ENCODE measurements at regions of chrX and their contacts with region 1.

Region 1: GRCh38 chrX:70030301-70030767 is 19.4 kb downstream of the AWAT2 start:
- DNase-seq: peak; percentile 50
- ATAC-seq: peak; percentile 78
- H3K4me3 Mint-ChIP-seq: no peak overlapping the region
- H3K27ac Mint-ChIP-seq: no peak overlapping the region
- H3K4me1 Mint-ChIP-seq: peaks cover 8% of the 10 kb centered on the region
- H3K27me3 Mint-ChIP-seq: no peaks in the 10 kb centered on the region

Region 2: DNA sequence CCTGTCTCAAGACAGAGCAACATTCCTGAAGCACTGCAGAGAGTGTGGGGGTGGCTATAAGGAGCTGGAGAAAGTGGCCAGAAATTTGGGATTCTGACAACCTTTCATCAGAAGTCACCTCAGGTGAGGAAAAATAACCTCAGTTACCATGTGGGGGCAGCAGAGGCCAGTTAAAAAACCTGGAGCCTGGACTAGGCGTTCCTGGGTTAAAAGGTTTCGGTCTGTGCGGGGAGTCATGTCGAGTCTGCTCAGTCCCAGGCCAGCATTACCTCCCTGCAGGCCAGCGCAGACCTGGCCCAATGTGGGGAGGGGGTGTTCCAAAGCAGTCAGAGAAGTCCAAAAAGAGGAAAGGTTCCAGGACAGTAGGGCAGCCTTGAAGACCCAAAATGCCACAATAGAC is 537.1 kb before region 1 on chrX:
- CTCF ChIA-PET with region 1: no interaction called
- POLR2A ChIA-PET with region 1: no interaction called
- intact Hi-C with region 1: loop called in 1 of 2 experiments (anchors 1 kb)
- DNase-seq: peak; percentile 48
- ATAC-seq: peak; percentile 42
- H3K4me3 Mint-ChIP-seq: no peak overlapping the region
- H3K27ac Mint-ChIP-seq: no peak overlapping the region
- H3K4me1 Mint-ChIP-seq: no peaks in the 10 kb centered on the region
- H3K27me3 Mint-ChIP-seq: peaks cover 11% of the 10 kb centered on the region

Region 3: DNA sequence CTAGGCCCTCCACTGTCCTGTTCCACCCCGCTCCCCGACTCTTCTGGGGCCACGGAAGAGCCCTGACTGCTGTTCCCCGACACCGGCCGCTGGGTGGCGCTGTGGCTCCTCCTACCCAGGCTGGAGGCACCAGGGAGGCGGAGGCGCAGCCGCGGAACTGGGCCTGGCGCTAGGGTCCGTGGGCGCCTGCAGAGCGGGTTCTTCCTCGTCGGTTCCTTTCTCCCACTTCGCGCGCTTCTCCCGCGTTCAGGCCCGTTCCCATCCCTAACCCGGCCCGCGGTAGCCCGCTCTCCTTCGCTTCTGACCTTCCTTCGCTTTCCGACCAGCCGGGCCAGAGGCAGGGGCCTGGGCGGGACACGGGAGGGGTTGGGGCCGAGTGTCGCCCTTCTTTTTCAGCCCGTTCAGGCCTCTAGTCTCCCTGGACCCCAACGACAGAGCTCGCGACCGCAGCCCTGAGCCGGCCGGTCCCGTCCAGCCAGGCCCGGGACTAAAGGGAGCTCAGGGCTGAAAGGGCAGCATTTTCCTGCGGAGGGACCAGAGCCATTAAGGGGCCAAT is 491.9 kb before region 1 on chrX:
- CTCF ChIA-PET with region 1: interaction called, 12 read pairs
- POLR2A ChIA-PET with region 1: no interaction called
- intact Hi-C with region 1: loop called (anchors 1 kb)
- DNase-seq: peak; percentile 83
- ATAC-seq: peak; percentile 96
- H3K4me3 Mint-ChIP-seq: no peak overlapping the region
- H3K27ac Mint-ChIP-seq: no peak overlapping the region
- H3K4me1 Mint-ChIP-seq: peaks cover 8% of the 10 kb centered on the region
- H3K27me3 Mint-ChIP-seq: peaks cover 9% of the 10 kb centered on the region

Region 4: DNA sequence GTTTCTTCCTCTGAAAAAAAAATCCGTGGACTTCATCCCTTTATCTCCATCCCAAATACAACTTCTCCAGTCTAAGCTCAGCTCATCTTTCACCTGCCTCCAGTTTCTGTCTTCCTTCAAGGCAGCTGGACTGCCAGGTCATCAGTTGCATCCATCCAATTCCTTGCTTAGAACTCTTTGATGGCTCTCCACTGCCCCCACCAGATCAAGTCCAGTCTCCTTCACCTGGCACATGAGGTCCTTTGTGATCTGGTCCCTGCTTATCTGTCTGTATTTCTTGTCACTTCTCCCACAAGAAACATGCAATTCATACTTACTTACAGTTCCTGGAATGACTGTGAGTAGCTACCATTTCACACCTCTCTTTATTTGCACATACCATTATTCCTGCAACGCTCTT is 65.7 kb after region 1 on chrX:
- CTCF ChIA-PET with region 1: interaction called, 13 read pairs
- POLR2A ChIA-PET with region 1: no interaction called
- intact Hi-C with region 1: loop called (anchors 5 kb)
- DNase-seq: no peak
- ATAC-seq: no peak
- H3K4me3 Mint-ChIP-seq: no peak overlapping the region
- H3K27ac Mint-ChIP-seq: no peak overlapping the region
- H3K4me1 Mint-ChIP-seq: no peaks in the 10 kb centered on the region
- H3K27me3 Mint-ChIP-seq: peaks cover 5% of the 10 kb centered on the region

Region 5: GRCh38 chrX:70433848-70434351 is 403.6 kb after region 1 on chrX:
- CTCF ChIA-PET with region 1: no interaction called
- POLR2A ChIA-PET with region 1: no interaction called
- intact Hi-C with region 1: loop called in 1 of 2 experiments (anchors 5 kb)
- DNase-seq: peak; percentile 86
- ATAC-seq: peak; percentile 80
- H3K4me3 Mint-ChIP-seq: peak overlapping the region; percentile 85
- H3K27ac Mint-ChIP-seq: peak overlapping the region; percentile 89
- H3K4me1 Mint-ChIP-seq: peaks cover 11% of the 10 kb centered on the region
- H3K27me3 Mint-ChIP-seq: peaks cover 14% of the 10 kb centered on the region

Measured in activated CD4-positive, alpha-beta T cell treated with anti-CD3 and anti-CD28 coated beads for 36 hours (primary cell).